HCT116 (cell line): ENCODE measurements at regions of chr14 and their contacts with region 1.

Region 1: GRCh38 chr14:95431199-95432143 is 85.0 kb downstream of the SYNE3 start:
- DNase-seq: no peak
- ATAC-seq: peak; percentile 77
- H3K4me3 ChIP-seq: no peak overlapping the region
- H3K27ac ChIP-seq: no peak overlapping the region
- H3K4me1 ChIP-seq: peaks cover 0 to 3% of the 10 kb centered on the region in 2 experiments; a peak in 2 of 4 replicates
- H3K27me3 ChIP-seq: no peaks in the 10 kb centered on the region
- CTCF ChIP-seq: peak; percentile 41 to 73 (median 63); a peak in 5 of 6 replicates
- POLR2A ChIP-seq: no peak
- RAD21 ChIP-seq: peak; percentile 67

Region 2: DNA sequence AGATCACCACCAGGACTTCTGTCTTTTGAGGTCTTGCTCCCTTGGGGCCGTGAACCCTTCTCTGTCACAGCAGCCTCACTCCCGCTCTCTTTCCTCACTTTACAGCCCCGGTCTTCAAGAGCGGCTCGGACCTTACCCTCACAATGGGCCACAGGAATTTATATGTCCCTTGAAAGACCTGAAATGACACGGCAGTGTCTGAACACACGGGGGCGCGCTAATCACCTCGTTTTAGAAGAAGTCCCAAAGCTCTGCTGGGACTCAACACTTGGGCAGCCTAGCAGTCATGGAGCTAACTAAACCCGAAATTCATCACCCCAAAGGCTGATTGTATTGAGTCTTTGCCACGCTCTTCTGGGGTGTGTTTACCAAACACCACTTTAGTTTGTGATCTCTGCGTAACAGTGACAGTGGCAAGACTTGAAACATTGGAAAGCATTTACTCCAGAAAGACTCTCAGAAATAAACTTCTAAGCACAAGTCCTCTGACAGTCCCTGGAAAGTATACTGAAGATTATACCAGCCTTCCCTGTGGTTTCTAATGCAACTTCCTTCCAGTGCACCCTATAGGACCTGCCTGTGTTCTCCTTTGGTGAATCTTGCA is 1007.9 kb before region 1 on chr14:
- CTCF ChIA-PET with region 1: no interaction called
- POLR2A ChIA-PET with region 1: no interaction called
- RAD21 ChIA-PET with region 1: no interaction called
- intact Hi-C with region 1: loop called (anchors 5 kb)
- DNase-seq: peak; percentile 75
- ATAC-seq: peak; percentile 99
- H3K4me3 ChIP-seq: no peak overlapping the region
- H3K27ac ChIP-seq: no peak overlapping the region
- H3K4me1 ChIP-seq: peaks cover 0 to 6% of the 10 kb centered on the region in 2 experiments; a peak in 1 of 4 replicates
- H3K27me3 ChIP-seq: peaks cover 10% of the 10 kb centered on the region
- CTCF ChIP-seq: peak; percentile 80 to 83 (median 82)
- POLR2A ChIP-seq: no peak
- RAD21 ChIP-seq: peak; percentile 74

Region 3: GRCh38 chr14:94689218-94689984 is 742.1 kb before region 1 on chr14:
- CTCF ChIA-PET with region 1: interaction called, 3 read pairs
- POLR2A ChIA-PET with region 1: no interaction called
- RAD21 ChIA-PET with region 1: interaction called in 1 of 2 experiments, 3 read pairs
- intact Hi-C with region 1: loop called (anchors 2 kb)
- DNase-seq: no peak
- ATAC-seq: peak; percentile 99
- H3K4me3 ChIP-seq: peak overlapping the region; percentile 24 to 29; a peak in 3 of 4 replicates
- H3K27ac ChIP-seq: no peak overlapping the region
- H3K4me1 ChIP-seq: peaks cover 0 to 8% of the 10 kb centered on the region in 2 experiments; a peak in 1 of 4 replicates
- H3K27me3 ChIP-seq: no peaks in the 10 kb centered on the region
- CTCF ChIP-seq: peak; percentile 90 to 97 (median 96)
- POLR2A ChIP-seq: no peak
- RAD21 ChIP-seq: peak; percentile 98

Region 4: DNA sequence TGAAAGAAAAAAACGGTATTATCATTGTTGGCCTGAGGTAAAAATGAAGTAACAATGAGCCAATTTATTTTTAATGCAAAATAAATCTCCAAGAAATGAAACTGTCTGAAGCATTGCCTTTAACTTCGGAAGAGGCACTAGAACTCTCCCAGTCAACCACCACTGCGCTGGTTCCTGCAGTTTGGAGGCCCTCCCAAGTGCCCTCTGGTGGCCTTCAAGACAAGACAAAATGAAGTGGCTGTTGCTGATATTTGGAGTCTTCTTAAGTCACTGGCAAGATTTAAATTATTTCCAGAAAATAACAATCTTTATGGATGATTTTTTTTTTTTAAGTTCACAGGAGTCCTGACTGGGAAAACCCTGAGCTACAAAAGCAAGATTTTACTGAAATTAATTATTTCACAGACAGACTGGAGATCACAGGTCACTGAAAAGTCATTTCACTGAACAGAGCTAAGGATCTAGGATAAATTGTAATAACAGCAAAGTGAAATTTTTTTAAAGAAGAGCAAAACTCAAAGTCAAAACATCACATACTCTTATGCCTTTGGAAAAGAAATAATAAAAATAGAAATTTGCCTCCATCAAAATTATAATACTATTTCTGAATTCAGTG is 332.4 kb before region 1 on chr14:
- CTCF ChIA-PET with region 1: interaction called, 3 read pairs
- POLR2A ChIA-PET with region 1: no interaction called
- RAD21 ChIA-PET with region 1: no interaction called
- intact Hi-C with region 1: loop called (anchors 5 kb)
- DNase-seq: peak; percentile 40
- ATAC-seq: peak; percentile 92
- H3K4me3 ChIP-seq: no peak overlapping the region
- H3K27ac ChIP-seq: no peak overlapping the region
- H3K4me1 ChIP-seq: no peaks in the 10 kb centered on the region
- H3K27me3 ChIP-seq: no peaks in the 10 kb centered on the region
- CTCF ChIP-seq: peak; percentile 55 to 79 (median 79); a peak in 5 of 6 replicates
- POLR2A ChIP-seq: no peak
- RAD21 ChIP-seq: peak; percentile 62

Region 5: DNA sequence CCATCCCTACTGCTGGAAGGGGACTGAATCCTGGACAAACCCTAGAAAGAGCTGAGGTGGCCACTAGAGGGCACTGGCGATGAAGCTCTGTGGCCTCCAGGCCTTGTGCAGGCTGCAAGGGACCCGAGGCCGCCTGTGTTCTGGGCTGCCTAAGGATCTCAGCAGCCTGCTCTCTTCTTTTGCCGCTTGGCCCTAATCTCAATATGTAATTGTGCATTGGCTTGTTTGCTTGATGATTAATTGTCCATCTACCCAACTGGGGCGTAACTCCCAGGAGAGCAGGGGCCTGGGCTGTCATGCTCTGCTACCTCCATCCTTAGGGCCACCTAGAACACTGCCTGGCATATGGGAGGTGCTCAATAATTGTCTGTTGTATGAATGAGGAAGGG is 11.2 kb after region 1 on chr14:
- CTCF ChIA-PET with region 1: interaction called, 13 read pairs
- POLR2A ChIA-PET with region 1: no interaction called
- RAD21 ChIA-PET with region 1: no interaction called
- intact Hi-C with region 1: no loop called
- DNase-seq: peak; percentile 49
- ATAC-seq: peak; percentile 99
- H3K4me3 ChIP-seq: no peak overlapping the region
- H3K27ac ChIP-seq: no peak overlapping the region
- H3K4me1 ChIP-seq: peaks cover 0 to 7% of the 10 kb centered on the region in 2 experiments; a peak in 1 of 4 replicates
- H3K27me3 ChIP-seq: no peaks in the 10 kb centered on the region
- CTCF ChIP-seq: peak; percentile 85 to 91 (median 91)
- POLR2A ChIP-seq: no peak
- RAD21 ChIP-seq: peak; percentile 94